Activated T-helper 1 cell treated with anti-CD3 and anti-CD28 coated beads, Interleukin-12 subunit alpha, Interleukin-12 subunit beta, Interleukin-2, Interleukin-4 antibody, amounts not matched to agents 30 ng/mL and 10 ng/mL and 1 ng/mL, durations not matched to agents 14 hours and 24 hours and 36 hours (primary cell): ENCODE measurements at regions of chr16 and their contacts with region 1.

Region 1: DNA sequence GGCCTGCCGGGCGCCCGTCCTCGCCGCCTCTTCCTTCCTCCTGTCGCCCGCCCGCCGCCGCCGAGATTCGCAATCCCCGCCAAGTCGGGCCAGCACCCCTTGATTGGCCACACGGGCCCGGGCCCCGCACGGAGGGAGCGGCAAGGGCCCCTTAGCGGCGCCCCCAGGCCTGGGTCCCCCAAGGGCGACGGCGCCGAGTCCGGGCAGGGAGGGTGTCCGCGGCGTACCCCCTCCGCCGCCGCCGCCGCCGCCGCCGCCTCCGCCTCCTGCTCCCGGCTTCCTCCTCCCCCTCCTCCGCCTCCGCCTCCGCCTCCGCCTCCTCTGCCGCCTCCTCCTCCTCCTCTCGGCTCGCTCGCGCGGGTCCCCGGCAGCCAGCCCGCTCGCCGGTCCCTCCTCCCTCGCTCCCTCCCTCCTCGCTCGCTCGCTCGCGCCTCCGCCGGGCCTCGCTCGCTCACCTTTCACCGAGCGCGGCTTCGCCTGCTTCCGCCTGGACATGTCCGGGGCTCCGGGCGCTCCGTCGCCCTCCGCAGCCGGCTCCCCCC is 561 bp downstream of the ZNF423 start:
- DNase-seq: peak; percentile 66
- H3K4me3 Mint-ChIP-seq: peak overlapping the region; percentile 39
- H3K27ac Mint-ChIP-seq: no peak overlapping the region
- H3K4me1 Mint-ChIP-seq: peaks cover 5% of the 10 kb centered on the region
- H3K27me3 Mint-ChIP-seq: peaks cover 47% of the 10 kb centered on the region

Region 2: GRCh38 chr16:49407873-49408550 is 447.3 kb before region 1 on chr16:
- intact Hi-C with region 1: loop called (anchors 10 kb)
- DNase-seq: peak; percentile 47
- H3K4me3 Mint-ChIP-seq: no peak overlapping the region
- H3K27ac Mint-ChIP-seq: no peak overlapping the region
- H3K4me1 Mint-ChIP-seq: no peaks in the 10 kb centered on the region
- H3K27me3 Mint-ChIP-seq: no peaks in the 10 kb centered on the region

Region 3: GRCh38 chr16:49834531-49835151 is 20.7 kb before region 1 on chr16:
- intact Hi-C with region 1: no loop called
- DNase-seq: no peak
- H3K4me3 Mint-ChIP-seq: no peak overlapping the region
- H3K27ac Mint-ChIP-seq: no peak overlapping the region
- H3K4me1 Mint-ChIP-seq: no peaks in the 10 kb centered on the region
- H3K27me3 Mint-ChIP-seq: peaks cover 10% of the 10 kb centered on the region

Region 4: DNA sequence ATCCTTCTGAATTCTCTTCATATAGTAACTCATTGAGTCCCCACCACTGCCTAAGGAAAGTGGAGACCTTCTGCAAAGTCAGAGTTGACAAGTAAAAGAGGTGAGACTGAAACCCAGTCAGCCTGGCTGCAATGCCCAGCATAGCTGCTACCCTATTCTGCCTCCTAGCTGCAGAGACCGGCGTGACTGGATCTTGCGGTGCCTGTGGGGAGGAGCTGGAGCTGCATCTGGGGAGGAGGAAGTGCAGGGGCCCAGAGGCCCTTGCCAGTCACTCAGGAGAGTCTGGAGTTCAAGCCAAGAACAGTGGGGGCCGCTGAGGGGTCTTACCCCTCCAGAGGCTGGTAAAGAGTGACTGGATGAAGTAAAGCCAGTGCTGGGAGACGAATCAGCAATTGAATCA is 35.5 kb after region 1 on chr16:
- intact Hi-C with region 1: no loop called
- DNase-seq: no peak
- H3K4me3 Mint-ChIP-seq: no peak overlapping the region
- H3K27ac Mint-ChIP-seq: no peak overlapping the region
- H3K4me1 Mint-ChIP-seq: no peaks in the 10 kb centered on the region
- H3K27me3 Mint-ChIP-seq: no peaks in the 10 kb centered on the region